CD4-positive, alpha-beta memory T cell (primary cell): ENCODE measurements at regions of chr9 and their contacts with region 1.

Region 1: DNA sequence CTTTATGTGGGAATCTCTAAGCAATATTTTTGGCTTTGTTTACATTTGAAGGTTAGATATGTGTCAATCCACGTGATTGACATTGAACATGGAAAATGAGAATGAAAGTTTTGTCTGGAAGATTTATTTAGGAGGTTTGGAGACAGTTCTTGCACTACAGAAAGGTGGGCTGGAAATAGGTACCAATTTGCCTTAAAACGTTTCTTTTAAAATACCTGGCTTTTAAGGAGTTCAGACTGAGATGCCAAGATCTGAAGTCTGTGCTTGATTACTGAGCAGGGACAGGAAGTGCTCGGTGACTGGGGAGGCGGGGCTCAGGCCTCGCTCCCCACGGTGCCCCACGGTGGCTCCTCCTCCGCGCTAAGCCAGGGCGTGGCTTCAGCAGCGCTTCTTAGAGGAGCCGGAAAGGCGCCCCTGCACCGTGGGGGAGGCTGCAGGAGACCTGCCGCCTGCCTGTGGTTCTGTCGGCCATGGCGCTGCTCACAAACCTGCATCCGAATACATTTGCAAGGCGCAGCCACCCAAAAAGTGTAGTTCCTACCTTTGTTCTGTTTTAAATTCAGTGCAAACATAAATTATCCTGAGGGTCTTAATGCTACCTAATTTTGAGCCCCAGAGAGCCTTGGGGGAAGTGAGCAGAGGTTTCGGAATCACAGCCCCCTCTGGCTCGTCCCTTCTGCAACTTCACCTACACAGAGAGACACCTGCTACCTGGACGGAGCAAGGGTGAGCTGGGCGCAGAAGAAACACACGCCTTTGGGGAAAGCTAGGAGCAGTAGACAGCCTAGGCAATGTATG is 49.2 kb downstream of the USP20 start:
- DNase-seq: peak; percentile 93 to 97 (median 95)
- H3K4me3 ChIP-seq: peak overlapping the region; percentile 78 to 80
- H3K4me3 Mint-ChIP-seq: peak overlapping the region; percentile 90 to 98 (median 94)
- H3K27ac ChIP-seq: peak overlapping the region; percentile 98
- H3K27ac Mint-ChIP-seq: peak overlapping the region; percentile 99 to 100 (median 100)
- H3K4me1 ChIP-seq: peaks cover 62% of the 10 kb centered on the region
- H3K4me1 Mint-ChIP-seq: peaks cover 26 to 60% (median 40%) of the 10 kb centered on the region in 4 donors
- H3K27me3 ChIP-seq: no peaks in the 10 kb centered on the region
- H3K27me3 Mint-ChIP-seq: no peaks in the 10 kb centered on the region

Region 2: GRCh38 chr9:128947422-128948301 is 936.8 kb before region 1 on chr9 and contains the starts of genes DOLK and NUP188:
- CTCF ChIA-PET with region 1: no interaction called
- POLR2A ChIA-PET with region 1: no interaction called
- intact Hi-C with region 1: no loop called
- DNase-seq: peak; percentile 96 to 100 (median 97)
- H3K4me3 ChIP-seq: peak within 1 kb of the TSS; percentile 81 to 90
- H3K4me3 Mint-ChIP-seq: peak within 1 kb of the TSS; percentile 94 to 100 (median 98)
- H3K27ac ChIP-seq: peak within 1 kb of the TSS; percentile 87
- H3K27ac Mint-ChIP-seq: peak within 1 kb of the TSS; percentile 93 to 99 (median 98)
- H3K4me1 ChIP-seq: peaks cover 29% of the 10 kb centered on the region
- H3K4me1 Mint-ChIP-seq: peaks cover 16 to 39% (median 27%) of the 10 kb centered on the region in 4 donors
- H3K27me3 ChIP-seq: no peaks in the 10 kb centered on the region
- H3K27me3 Mint-ChIP-seq: no peaks in the 10 kb centered on the region
- total RNA-seq, gene DOLK: 9.9 to 12.9 TPM
- total RNA-seq, gene NUP188: 70.1 to 70.8 TPM

Region 3: DNA sequence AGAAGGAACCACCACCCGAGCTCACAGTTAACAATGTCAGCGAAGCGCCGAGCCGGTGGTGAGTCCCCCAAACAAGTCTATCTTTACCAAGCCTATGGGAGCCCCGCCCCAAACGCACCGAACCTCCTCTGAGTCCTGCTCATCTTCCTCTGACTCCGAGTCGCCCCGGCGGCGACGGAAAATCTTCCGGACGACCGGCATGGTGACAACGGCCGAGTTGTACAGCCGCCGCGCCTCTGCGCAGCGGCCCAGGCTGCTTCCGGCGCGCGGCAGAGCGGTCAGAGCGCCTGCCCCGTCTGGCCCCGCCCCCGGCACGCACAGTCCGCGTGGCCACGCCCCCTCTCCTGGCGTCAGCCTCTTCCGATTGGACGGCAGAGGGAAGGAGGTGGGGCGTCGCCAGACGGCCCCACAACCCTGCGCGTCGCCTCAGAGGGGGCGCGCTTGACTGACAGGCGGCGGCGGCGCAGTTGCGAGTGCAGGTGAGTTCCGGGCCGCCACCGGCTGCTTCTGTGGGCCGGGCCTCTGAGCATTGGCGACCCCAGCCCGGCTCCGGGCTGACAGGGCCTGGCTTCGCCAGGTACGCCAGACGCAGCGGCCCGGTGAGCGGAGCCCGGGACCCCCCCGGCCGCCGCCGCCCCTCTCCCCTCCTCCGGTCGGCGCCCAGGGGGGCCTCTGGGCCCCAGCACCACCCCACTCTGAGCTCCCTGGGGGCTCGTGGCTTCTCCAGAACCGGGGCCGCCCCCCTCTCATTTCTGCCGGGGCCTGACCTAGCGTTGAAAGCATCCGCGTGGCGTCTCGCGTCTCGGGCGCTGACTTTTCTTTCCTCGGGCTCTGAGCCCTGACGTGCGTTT is 49.2 kb before region 1 on chr9 and contains the starts of genes C9orf78 and USP20:
- CTCF ChIA-PET with region 1: interaction called, 41 read pairs
- POLR2A ChIA-PET with region 1: interaction called, 221 read pairs
- intact Hi-C with region 1: loop called (anchors 1 kb)
- DNase-seq: peak; percentile 95 to 98 (median 98)
- H3K4me3 ChIP-seq: peak within 1 kb of the TSS; percentile 76 to 98
- H3K4me3 Mint-ChIP-seq: peak within 1 kb of the TSS; percentile 96 to 99 (median 98)
- H3K27ac ChIP-seq: peak within 1 kb of the TSS; percentile 92
- H3K27ac Mint-ChIP-seq: peak within 1 kb of the TSS; percentile 97 to 99 (median 99)
- H3K4me1 ChIP-seq: peaks cover 59% of the 10 kb centered on the region
- H3K4me1 Mint-ChIP-seq: peaks cover 40 to 69% (median 56%) of the 10 kb centered on the region in 4 donors
- H3K27me3 ChIP-seq: no peaks in the 10 kb centered on the region
- H3K27me3 Mint-ChIP-seq: no peaks in the 10 kb centered on the region
- total RNA-seq, gene C9orf78: 95.5 to 96.9 TPM
- total RNA-seq, gene USP20: 123 to 132 TPM

Region 4: DNA sequence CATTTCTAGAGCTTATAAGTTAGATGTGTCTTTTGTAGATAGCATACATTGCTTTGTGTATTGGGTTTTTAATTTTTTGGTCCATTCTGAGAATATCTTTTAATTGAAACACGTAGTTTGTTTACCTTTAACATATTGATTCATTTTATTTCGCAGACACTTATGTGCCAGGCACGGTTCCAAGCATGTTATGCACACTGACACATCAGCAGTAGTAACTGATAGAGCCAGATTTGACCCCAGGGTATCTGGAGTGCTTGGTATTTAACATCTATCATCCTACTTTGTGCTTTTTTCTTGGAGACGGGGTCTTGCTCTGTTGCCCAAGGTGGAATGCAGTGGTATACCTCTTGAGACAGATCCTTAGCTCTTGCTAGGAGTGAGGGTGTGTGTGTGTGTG is 22.8 kb after region 1 on chr9:
- CTCF ChIA-PET with region 1: interaction called, 5 read pairs
- POLR2A ChIA-PET with region 1: interaction called, 14 read pairs
- intact Hi-C with region 1: no loop called
- DNase-seq: no peak
- H3K4me3 ChIP-seq: no peak overlapping the region
- H3K4me3 Mint-ChIP-seq: no peak overlapping the region
- H3K27ac ChIP-seq: no peak overlapping the region
- H3K27ac Mint-ChIP-seq: peak overlapping the region in 6 of 7 donors; percentile 26 to 76 (median 52)
- H3K4me1 ChIP-seq: no peaks in the 10 kb centered on the region
- H3K4me1 Mint-ChIP-seq: peaks cover 16 to 31% (median 23%) of the 10 kb centered on the region in 4 donors
- H3K27me3 ChIP-seq: no peaks in the 10 kb centered on the region
- H3K27me3 Mint-ChIP-seq: no peaks in the 10 kb centered on the region

Region 5: DNA sequence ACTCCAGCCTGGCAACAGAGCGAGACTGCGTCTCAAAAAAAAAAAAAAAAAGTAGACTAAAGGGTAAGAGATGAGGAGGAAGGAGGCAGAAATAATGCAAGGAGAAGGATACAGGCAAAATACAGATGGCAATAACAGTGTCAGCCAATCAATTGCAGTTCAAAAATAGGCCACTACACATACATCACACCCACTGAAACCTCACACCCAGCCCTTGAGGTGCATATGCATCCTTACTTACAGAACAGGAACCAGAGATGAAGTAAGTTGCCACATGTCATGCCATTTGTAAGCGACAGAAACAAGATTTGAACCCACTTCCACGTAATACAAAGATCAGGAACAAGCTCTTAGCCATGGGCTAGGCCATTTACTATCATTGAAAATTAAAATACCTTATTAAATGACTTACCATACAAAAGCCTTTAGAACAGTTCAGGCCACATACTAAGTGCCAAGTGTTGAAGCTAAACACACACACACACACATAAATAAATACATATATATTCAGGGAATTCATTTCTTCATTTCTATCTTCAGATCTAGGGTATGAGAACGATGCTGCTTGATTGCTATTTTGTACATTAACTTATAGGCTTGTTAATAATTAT is 60.2 kb after region 1 on chr9:
- CTCF ChIA-PET with region 1: interaction called, 4 read pairs
- POLR2A ChIA-PET with region 1: interaction called, 67 read pairs
- intact Hi-C with region 1: loop called (anchors 2 kb)
- DNase-seq: peak; percentile 70 to 83 (median 80)
- H3K4me3 ChIP-seq: no peak overlapping the region
- H3K4me3 Mint-ChIP-seq: peak overlapping the region; percentile 33 to 80 (median 52)
- H3K27ac ChIP-seq: peak overlapping the region; percentile 60
- H3K27ac Mint-ChIP-seq: peak overlapping the region; percentile 35 to 92 (median 85)
- H3K4me1 ChIP-seq: peaks cover 59% of the 10 kb centered on the region
- H3K4me1 Mint-ChIP-seq: peaks cover 35 to 70% (median 50%) of the 10 kb centered on the region in 4 donors
- H3K27me3 ChIP-seq: no peaks in the 10 kb centered on the region
- H3K27me3 Mint-ChIP-seq: no peaks in the 10 kb centered on the region

Region 6: GRCh38 chr9:130029223-130029973 is 145.0 kb after region 1 on chr9:
- CTCF ChIA-PET with region 1: no interaction called
- POLR2A ChIA-PET with region 1: interaction called, 392 read pairs
- intact Hi-C with region 1: no loop called
- DNase-seq: no peak
- H3K4me3 ChIP-seq: no peak overlapping the region
- H3K4me3 Mint-ChIP-seq: peak overlapping the region; percentile 68 to 79 (median 72)
- H3K27ac ChIP-seq: peak overlapping the region; percentile 77
- H3K27ac Mint-ChIP-seq: peak overlapping the region; percentile 58 to 99 (median 91)
- H3K4me1 ChIP-seq: peaks cover 94% of the 10 kb centered on the region
- H3K4me1 Mint-ChIP-seq: peaks cover 68 to 96% (median 82%) of the 10 kb centered on the region in 4 donors
- H3K27me3 ChIP-seq: no peaks in the 10 kb centered on the region
- H3K27me3 Mint-ChIP-seq: no peaks in the 10 kb centered on the region

Region 7: DNA sequence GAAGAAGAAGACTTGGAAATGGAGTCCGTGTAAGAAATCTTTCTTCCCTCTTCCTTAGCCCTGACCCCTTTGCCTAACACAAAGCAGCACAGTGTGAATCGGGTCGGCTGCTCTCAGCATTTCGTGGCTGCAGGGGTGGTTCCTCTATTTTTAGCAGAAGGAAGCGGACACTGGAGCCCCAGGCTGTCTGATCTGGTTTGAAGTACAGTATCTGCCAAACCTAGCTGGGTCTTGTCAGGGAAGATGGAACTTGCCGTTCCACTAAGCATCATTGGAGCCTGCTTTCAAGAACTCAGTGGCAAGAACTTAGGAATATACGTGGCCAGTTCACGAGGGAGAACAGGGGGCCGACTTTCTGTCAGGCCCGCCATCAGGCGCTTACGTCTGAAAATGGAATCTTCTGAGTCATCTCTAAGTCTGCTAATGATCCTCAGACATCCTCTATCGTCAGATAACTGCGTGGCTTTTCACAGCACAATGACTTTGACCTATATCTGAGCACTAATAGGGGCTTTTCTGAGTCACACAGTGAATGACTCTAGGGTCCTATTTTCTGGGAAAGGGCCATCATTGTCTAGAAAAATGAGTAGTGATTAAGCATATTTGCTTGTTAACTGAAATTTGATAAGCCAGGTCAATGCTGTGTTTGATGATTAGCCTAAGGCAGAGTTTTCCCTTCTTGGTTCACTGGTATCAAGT is 244.5 kb after region 1 on chr9:
- CTCF ChIA-PET with region 1: no interaction called
- POLR2A ChIA-PET with region 1: interaction called, 11 read pairs
- intact Hi-C with region 1: loop called (anchors 1 kb)
- DNase-seq: peak; percentile 53 to 89 (median 60)
- H3K4me3 ChIP-seq: peak overlapping the region in 1 of 2 donors; percentile 39
- H3K4me3 Mint-ChIP-seq: peak overlapping the region; percentile 79 to 87 (median 84)
- H3K27ac ChIP-seq: peak overlapping the region; percentile 92
- H3K27ac Mint-ChIP-seq: peak overlapping the region; percentile 97 to 100 (median 99)
- H3K4me1 ChIP-seq: peaks cover 60% of the 10 kb centered on the region
- H3K4me1 Mint-ChIP-seq: peaks cover 40 to 67% (median 53%) of the 10 kb centered on the region in 4 donors
- H3K27me3 ChIP-seq: no peaks in the 10 kb centered on the region
- H3K27me3 Mint-ChIP-seq: no peaks in the 10 kb centered on the region

Region 8: DNA sequence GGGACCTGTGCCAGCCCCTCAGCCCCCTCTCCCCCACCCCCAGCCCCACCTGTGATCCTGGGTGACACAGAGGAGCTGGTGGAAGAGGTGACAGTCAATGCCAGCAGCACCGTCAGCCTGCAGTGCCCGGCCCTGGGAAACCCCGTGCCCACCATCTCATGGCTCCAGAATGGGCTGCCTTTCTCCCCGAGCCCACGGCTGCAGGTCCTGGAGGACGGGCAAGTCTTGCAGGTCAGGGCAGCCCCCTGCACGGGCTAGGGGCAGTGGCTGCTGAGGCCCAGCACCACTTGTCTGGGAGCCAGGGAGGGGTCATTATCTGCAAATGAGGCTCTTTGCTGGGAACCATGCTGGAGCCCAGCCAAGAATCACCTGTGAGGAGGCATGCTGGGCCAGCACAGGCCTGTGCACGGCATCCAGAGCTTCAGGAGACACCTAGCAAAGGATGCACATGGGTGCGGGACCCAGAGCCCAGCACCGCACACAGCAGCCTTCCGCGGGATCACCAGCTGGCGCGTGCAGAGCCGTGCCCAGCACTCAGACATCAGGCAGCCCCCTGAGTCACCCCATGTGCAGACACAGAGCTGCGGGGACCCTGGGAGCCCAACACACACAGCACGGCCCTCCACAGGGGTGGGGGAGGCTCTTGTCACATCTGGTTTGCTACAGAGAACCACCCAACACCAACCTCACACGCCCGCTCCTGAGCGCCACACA is 498.4 kb after region 1 on chr9:
- CTCF ChIA-PET with region 1: no interaction called
- POLR2A ChIA-PET with region 1: no interaction called
- intact Hi-C with region 1: no loop called
- DNase-seq: no peak
- H3K4me3 ChIP-seq: no peak overlapping the region
- H3K4me3 Mint-ChIP-seq: no peak overlapping the region
- H3K27ac ChIP-seq: no peak overlapping the region
- H3K27ac Mint-ChIP-seq: no peak overlapping the region
- H3K4me1 ChIP-seq: no peaks in the 10 kb centered on the region
- H3K4me1 Mint-ChIP-seq: no peaks in the 10 kb centered on the region
- H3K27me3 ChIP-seq: no peaks in the 10 kb centered on the region
- H3K27me3 Mint-ChIP-seq: peaks cover 0 to 7% of the 10 kb centered on the region in 2 donors